ENCODE measurements at regions of chr2 and their contacts with region 1.

Region 1: GRCh38 chr2:229653531-229653930 is 60.8 kb downstream of the DNER start:
- DNase-seq: no peak
- H3K4me3 ChIP-seq: no peak overlapping the region
- H3K27ac ChIP-seq: no peak overlapping the region
- H3K4me1 ChIP-seq: peaks cover 0 to 16% (median under 1%) of the 10 kb centered on the region in 4 experiments; a peak in 3 of 7 replicates
- H3K27me3 ChIP-seq: no peaks in the 10 kb centered on the region
- CTCF ChIP-seq: no peak
- EP300 ChIP-seq: no peak
- POLR2A ChIP-seq: no peak
- RAD21 ChIP-seq: no peak

Region 2: GRCh38 chr2:229501051-229501794 is 152.3 kb before region 1 on chr2:
- CTCF ChIA-PET with region 1: no interaction called
- POLR2A ChIA-PET with region 1: no interaction called
- DNase-seq: no peak
- H3K4me3 ChIP-seq: no peak overlapping the region
- H3K27ac ChIP-seq: no peak overlapping the region
- H3K4me1 ChIP-seq: peaks cover 0 to 9% (median 3%) of the 10 kb centered on the region in 4 experiments; a peak in 4 of 7 replicates
- H3K27me3 ChIP-seq: no peaks in the 10 kb centered on the region
- CTCF ChIP-seq: no peak
- EP300 ChIP-seq: no peak
- POLR2A ChIP-seq: no peak
- RAD21 ChIP-seq: no peak

Region 3: GRCh38 chr2:229634601-229635370 is 18.7 kb before region 1 on chr2:
- CTCF ChIA-PET with region 1: interaction called, 18 read pairs
- POLR2A ChIA-PET with region 1: no interaction called
- DNase-seq: no peak
- H3K4me3 ChIP-seq: no peak overlapping the region
- H3K27ac ChIP-seq: no peak overlapping the region
- H3K4me1 ChIP-seq: no peaks in the 10 kb centered on the region
- H3K27me3 ChIP-seq: no peaks in the 10 kb centered on the region
- CTCF ChIP-seq: no peak
- EP300 ChIP-seq: no peak
- POLR2A ChIP-seq: no peak
- RAD21 ChIP-seq: no peak

Region 4: DNA sequence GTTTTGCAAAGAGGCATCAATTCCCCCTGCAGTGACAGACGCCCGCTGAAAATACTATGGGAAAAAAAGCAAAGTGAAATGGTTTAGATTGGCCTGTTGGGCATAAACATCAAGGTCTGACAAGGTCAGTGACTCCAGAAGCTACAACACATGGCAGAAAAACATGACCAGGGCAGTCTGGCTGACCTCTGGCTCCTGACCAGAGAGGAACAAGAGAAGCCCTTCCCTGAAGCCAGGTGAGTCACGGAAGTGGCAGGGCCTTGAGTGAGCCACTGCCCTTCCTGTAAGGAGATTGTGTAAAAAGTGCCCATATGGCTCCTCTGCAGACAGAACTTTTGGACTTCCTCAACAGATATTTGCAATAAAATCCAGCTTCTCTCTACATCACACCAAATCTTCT is 11.2 kb before region 1 on chr2:
- CTCF ChIA-PET with region 1: interaction called, 18 read pairs
- POLR2A ChIA-PET with region 1: interaction called, 3 read pairs
- DNase-seq: no peak
- H3K4me3 ChIP-seq: no peak overlapping the region
- H3K27ac ChIP-seq: no peak overlapping the region
- H3K4me1 ChIP-seq: no peaks in the 10 kb centered on the region
- H3K27me3 ChIP-seq: no peaks in the 10 kb centered on the region
- CTCF ChIP-seq: no peak
- EP300 ChIP-seq: no peak
- POLR2A ChIP-seq: no peak
- RAD21 ChIP-seq: no peak